ENCODE measurements at regions of chr12 and their contacts with region 1.

Region 1: DNA sequence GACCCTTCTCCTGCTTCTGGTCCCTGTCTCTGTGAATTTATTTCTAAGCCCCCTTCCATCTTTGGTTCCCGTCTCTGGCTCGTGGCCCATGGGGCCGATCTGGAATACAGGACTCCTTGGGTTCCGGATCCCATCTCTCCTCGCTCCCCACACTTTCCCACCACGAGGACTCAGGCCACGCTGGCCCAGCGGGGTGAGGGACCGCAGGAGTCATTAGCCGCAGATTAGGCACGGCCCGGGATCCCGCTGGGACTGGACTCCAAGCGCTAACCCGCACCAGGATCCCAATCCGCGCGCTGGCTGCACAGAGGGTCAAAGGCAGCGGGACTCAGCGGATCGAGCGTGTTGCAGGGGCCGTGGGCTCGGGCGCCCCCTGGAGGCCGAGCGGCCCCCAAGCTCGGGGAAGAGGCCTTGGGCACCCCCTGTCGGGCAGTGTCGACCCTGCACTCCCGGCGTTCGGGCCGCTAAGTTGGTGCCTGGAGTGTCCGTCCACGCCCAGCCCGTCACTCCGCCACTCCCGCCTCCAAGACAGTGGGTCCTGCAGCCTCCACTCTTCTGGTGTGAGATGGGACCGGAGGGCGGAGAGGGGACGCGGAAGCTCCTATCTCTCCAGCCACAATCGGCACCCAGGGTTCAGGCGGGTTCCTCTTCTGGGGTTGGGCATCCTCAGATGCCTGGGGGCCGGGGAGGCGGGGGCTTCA is 9.5 kb downstream of the SHMT2 start:
- DNase-seq: peak; percentile 82 to 87 (median 84)
- H3K4me3 ChIP-seq: peak overlapping the region in 6 of 7 experiments; percentile 8 to 68 (median 50)
- H3K27ac ChIP-seq: no peak overlapping the region
- H3K4me1 ChIP-seq: peaks cover 0 to 65% (median 55%) of the 10 kb centered on the region in 4 experiments
- H3K27me3 ChIP-seq: peaks cover 0 to 90% (median 56%) of the 10 kb centered on the region in 5 experiments

Region 2: DNA sequence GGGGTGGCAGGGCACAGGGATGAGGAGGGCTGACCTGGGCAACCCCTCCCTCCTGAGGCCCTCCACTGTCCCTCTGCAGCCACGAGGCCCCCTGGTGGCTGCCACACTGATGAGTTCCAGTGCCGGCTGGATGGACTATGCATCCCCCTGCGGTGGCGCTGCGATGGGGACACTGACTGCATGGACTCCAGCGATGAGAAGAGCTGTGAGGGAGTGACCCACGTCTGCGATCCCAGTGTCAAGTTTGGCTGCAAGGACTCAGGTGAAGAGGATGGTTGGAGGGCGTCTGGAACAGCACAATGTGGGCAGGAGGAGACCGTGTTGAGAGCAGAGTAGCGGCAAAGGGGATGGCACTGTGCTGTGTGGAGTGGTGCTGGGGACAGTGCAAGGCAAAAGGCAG is 65.9 kb before region 1 on chr12:
- CTCF ChIA-PET with region 1: no interaction called
- POLR2A ChIA-PET with region 1: no interaction called
- DNase-seq: peak; percentile 24 to 43 (median 38)
- H3K4me3 ChIP-seq: no peak overlapping the region
- H3K27ac ChIP-seq: no peak overlapping the region
- H3K4me1 ChIP-seq: peaks cover 0 to 12% (median 1%) of the 10 kb centered on the region in 4 experiments
- H3K27me3 ChIP-seq: peaks cover 0 to 1% (median 0%) of the 10 kb centered on the region in 5 experiments

Region 3: GRCh38 chr12:57213058-57213715 is 25.8 kb before region 1 on chr12:
- CTCF ChIA-PET with region 1: interaction called, 236 read pairs
- POLR2A ChIA-PET with region 1: interaction called, 3 read pairs
- DNase-seq: peak; percentile 84 to 89 (median 87)
- H3K4me3 ChIP-seq: no peak overlapping the region
- H3K27ac ChIP-seq: no peak overlapping the region
- H3K4me1 ChIP-seq: peaks cover 0 to 20% (median 13%) of the 10 kb centered on the region in 4 experiments
- H3K27me3 ChIP-seq: peaks cover 9 to 47% (median 35%) of the 10 kb centered on the region in 5 experiments

Region 4: DNA sequence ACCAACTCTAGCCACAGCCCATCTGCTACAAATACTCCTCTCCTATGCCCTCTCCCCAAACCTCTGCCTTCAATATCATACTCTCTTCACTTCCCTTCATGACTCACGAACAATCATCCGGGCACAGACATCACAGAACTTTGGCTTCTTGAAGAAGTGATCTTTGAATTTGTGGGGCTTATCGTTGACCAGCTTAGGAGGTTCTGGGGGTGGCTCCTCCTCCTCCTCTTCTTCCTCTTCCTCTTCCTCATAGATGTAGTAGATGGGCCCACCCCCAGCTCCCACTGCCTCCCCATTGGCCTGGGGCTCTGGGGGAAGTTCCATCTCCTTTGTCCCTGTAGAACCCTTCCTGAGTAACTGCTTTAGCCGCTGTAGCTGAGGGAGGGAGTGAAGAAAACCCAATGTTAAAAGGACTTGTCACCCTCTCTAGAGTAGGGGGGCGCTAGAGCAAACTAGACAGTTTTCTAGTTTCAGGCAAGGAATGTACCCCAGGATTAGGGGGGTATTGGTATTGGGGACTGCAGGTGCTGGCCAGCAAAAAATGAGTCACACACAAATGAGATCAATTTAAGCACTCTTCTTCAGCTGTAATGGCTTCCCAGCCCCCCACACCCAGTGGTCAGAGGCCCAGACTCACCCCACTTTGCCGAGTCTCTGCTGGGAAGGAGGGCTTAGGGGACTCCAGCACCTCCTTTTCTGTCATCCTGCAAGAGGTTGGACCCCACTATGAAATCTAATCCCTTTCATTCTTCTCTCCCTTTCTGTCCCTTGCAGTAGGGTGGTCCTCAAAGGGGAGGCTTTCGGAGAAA is 10.1 kb after region 1 on chr12:
- CTCF ChIA-PET with region 1: interaction called, 326 read pairs
- POLR2A ChIA-PET with region 1: no interaction called
- DNase-seq: peak in 2 of 3 donors; percentile 62 to 67
- H3K4me3 ChIP-seq: peak overlapping the region in 3 of 7 experiments; percentile 22 to 44 (median 30)
- H3K27ac ChIP-seq: no peak overlapping the region
- H3K4me1 ChIP-seq: peaks cover 0 to 11% (median 7%) of the 10 kb centered on the region in 4 experiments
- H3K27me3 ChIP-seq: peaks cover 0 to 9% (median 3%) of the 10 kb centered on the region in 5 experiments

Region 5: DNA sequence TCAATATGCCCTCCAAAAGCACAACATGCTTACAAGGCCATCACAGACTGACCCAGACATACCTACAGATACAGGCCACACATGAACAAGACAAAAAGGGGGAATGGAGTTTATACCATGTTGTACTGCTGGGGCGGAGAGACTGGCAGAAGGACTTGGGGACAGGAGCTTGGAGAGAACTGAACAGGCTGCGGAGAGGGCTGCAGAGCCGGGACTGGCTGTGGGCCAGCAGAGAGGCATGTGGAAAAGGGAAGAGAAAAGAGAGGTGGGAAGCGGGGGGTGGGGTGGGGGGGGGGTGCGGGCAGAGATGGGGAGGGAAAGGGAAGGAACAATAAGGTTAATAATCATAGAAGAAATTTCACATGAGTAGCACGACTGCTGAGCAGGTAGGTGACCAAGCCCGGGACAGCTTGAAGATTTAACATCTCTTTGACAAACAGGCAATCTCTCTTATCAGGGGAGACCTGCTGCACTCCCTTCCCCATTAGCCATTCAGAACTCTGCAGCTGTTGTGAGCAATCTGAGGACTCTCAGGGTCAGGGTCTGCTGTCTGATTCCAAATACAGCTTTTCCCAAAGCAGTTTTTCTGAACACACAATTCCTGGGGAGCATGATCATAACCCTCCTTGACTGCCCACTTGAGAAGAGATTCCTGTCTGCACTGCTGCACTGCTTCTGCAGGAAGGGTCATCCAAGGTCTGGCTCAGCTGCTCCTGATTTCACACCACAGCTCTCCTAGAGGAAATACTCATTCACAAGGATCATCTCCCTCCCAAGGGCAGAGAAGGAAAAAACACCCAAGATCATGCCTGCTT is 33.5 kb after region 1 on chr12:
- CTCF ChIA-PET with region 1: interaction called, 17 read pairs
- POLR2A ChIA-PET with region 1: no interaction called
- DNase-seq: no peak
- H3K4me3 ChIP-seq: no peak overlapping the region
- H3K27ac ChIP-seq: no peak overlapping the region
- H3K4me1 ChIP-seq: peaks cover 0 to 12% (median 6%) of the 10 kb centered on the region in 4 experiments
- H3K27me3 ChIP-seq: no peaks in the 10 kb centered on the region

Measured in common myeloid progenitor, CD34-positive (primary cell).